ENCODE measurements at regions of chr3 and their contacts with region 1.

Region 1: GRCh38 chr3:115040673-115041286 is 106.3 kb downstream of the ZBTB20 start:
- DNase-seq: peak; percentile 51
- H3K4me3 Mint-ChIP-seq: no peak overlapping the region
- H3K27ac Mint-ChIP-seq: no peak overlapping the region
- H3K4me1 Mint-ChIP-seq: no peaks in the 10 kb centered on the region
- H3K27me3 Mint-ChIP-seq: no peaks in the 10 kb centered on the region
- CTCF ChIP-seq: peak; percentile 51

Region 2: DNA sequence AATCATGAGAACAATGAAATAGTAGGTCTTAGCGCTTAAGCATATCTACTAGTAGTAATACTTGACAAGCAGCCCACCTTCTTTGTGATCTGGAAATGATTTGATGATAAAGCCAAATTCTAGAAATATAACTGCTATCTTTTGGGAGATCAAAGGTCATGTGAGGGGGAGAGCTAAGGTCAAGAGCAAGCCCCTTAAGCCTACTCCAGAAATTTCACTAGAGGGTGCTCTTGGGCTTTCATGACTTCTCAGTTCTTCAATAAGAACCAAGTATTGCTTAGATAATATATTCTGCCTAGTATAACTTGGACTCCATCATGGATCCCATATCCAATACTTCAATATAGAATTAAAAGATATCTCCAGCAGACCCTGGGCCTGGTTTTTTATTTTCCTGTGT is 213.3 kb before region 1 on chr3:
- CTCF ChIA-PET with region 1: no interaction called
- POLR2A ChIA-PET with region 1: no interaction called
- intact Hi-C with region 1: loop called (anchors 1 kb)
- DNase-seq: peak; percentile 50
- H3K4me3 Mint-ChIP-seq: no peak overlapping the region
- H3K27ac Mint-ChIP-seq: no peak overlapping the region
- H3K4me1 Mint-ChIP-seq: no peaks in the 10 kb centered on the region
- H3K27me3 Mint-ChIP-seq: no peaks in the 10 kb centered on the region
- CTCF ChIP-seq: peak; percentile 64

Measured in MCF 10A (cell line).